G401 (cell line): ENCODE measurements at regions of chr16 and their contacts with region 1.

Region 1: DNA sequence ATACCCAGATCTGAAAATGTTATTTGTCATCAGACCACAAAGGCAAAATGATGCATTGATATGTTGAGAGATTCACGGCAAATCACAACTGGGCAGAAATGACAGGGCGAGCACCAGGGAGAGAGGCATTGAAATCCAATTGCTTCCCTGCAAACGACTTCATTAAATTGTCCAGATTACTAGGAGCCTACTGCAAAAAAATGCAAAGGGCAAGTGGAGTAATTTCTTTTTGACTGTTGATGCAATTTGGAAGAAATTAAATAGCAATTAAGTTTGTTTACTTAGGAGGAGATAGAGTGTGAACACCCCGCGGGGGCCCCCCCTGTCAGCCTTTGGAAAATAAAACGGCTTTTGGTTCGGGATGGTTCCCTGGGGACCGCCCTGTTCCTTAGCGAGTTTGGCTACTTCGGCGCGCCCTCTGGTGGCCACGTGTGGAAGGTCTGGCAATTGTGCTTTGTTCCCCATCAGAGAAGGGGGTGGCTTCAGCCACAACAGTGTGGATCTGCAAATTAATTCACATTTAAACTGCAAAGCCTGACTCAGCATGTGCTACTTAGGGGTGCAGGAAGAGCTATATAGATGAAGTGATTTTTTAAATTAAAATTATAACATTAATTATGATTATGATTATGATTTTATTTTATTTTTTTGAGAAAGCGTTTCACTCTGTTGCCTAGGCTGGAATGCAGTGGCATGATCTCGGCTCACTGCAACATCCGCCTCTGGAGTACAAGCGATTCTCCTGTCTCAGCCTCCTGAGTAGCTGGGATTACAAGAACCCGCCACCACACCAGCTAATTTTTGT is 14.5 kb upstream of the TMC7 start:
- DNase-seq: peak; percentile 91

Region 2: GRCh38 chr16:18801197-18801972 is 167.9 kb before region 1 on chr16 and contains the start of gene ARL6IP1:
- in situ Hi-C with region 1: loop called (anchors 25 kb)
- DNase-seq: peak; percentile 99
- total RNA-seq, gene ARL6IP1: 64.1 and 119 TPM in 2 replicates

Region 3: DNA sequence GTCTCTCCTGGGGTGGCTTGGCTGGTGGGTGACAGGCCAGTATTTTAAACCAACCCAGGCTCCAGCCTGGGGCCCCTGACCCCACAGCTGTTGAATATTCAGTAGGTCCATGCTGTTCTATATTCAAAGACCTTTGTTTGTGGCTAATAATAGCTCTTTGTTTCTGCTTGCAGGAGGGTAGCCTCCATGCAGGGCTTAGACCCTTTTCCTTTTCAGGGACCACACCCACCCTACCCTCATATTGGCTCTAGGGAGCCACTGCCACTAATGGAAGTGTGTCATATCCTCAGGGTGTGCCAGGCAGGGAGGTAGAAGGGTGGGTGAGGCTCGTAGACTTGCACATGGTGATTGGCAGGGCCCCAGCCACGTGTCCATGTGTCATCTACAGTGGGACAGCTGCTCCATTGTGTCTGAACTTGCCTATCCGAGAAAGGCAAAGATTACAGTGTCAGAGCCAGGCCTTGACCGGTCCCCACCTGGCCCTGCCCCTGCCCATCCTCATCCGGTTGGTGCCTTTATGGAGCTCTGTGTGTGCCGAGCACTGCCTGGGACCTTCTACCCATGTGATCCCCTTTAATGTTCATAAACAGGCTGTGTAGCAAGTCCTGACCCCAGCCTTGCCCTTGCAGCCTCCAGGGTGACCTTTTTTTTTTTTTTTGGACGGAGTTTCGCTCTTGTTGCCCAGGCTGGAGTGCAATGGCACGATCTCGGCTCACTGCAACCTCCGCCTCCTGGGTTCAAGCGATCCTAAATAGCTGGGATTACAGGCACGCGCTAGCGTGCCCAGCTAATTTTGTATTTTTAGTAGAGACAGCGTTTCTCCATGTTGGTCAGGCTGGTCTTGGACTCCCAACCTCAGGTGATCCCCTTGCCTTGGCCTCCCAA is 36.6 kb after region 1 on chr16:
- in situ Hi-C with region 1: no loop called
- DNase-seq: peak; percentile 50

Region 4: DNA sequence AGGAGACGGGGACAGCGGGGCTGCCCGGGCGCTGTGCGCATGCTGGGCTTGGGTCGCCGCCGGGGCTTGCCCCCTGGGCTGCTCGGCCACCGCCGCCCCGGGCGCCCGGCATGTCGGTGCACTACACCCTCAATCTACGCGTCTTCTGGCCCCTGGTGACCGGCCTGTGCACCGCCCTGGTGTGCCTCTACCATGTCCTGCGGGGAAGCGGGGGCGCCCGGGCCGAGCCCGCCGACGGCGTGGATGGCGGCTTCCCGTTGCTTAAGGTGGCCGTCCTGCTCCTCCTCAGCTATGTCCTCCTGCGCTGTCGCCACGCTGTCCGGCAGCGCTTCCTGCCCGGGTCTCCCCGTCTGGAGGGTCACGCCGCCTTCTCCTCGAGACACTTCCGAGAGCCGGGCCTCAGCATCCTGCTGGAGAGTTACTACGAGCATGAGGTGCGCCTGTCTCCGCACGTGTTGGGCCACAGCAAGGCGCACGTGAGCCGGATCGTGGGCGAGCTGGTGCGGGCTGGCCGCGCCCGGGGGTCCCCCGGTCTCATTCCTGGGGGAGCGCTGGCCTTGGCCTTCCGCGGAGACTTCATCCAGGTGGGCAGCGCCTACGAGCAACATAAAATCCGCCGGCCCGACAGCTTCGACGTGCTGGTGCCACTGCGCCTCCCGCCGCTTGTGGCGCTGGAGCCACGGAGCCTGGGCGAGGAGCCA is 145.2 kb after region 1 on chr16:
- in situ Hi-C with region 1: loop called (anchors 5 kb)
- DNase-seq: no peak

Region 5: GRCh38 chr16:19153876-19154275 is 184.6 kb after region 1 on chr16:
- in situ Hi-C with region 1: no loop called
- DNase-seq: no peak